Activated CD8-positive, alpha-beta T cell treated with anti-CD3 and anti-CD28 coated beads for 36 hours (primary cell): ENCODE measurements at regions of chr2 and their contacts with region 1.

Region 1: DNA sequence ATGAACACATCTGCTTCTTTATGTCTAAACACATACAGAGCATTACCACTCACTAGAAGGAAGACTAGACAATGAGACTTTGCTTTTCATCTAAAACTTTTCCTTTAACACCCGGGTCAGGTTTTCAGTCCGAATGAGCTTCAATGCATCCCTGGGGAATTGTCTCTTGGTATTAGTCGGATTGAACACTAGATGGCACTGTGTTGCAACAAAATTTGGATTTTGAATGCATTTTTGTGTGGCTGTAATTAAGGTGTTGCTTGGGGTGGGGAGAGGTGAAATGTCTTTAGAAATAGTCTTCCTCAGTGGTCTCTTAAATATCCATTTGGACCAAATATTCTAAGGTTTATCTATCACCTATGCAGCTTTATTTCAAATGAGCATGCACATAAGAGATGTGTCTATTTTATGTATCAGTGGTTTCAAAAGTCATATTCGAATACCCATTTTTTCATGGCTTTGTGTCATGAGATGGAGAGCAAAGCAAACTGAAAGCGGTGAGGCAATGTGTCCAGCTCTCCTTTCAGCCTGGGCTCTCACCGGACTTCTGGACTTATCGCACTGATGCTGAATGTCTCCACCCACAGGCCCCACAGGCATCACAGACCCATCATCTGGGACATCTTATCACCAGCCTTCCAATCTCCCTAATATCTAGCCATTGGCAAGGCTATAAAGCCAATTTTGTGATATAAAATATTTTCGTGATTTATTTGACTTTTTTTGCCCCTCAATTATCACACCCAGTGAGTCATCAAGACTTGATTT is 510.3 kb downstream of the RNF144A start:
- DNase-seq: no peak
- ATAC-seq: peak; percentile 7
- H3K4me3 Mint-ChIP-seq: peak overlapping the region; percentile 24
- H3K27ac Mint-ChIP-seq: peak overlapping the region; percentile 74
- H3K4me1 Mint-ChIP-seq: peaks cover 41% of the 10 kb centered on the region
- H3K27me3 Mint-ChIP-seq: peaks cover 2% of the 10 kb centered on the region
- CTCF ChIP-seq: peak; percentile 92

Region 2: GRCh38 chr2:7348761-7349160 is 78.7 kb before region 1 on chr2:
- CTCF ChIA-PET with region 1: no interaction called
- POLR2A ChIA-PET with region 1: no interaction called
- intact Hi-C with region 1: no loop called
- DNase-seq: no peak
- ATAC-seq: no peak
- H3K4me3 Mint-ChIP-seq: no peak overlapping the region
- H3K27ac Mint-ChIP-seq: no peak overlapping the region
- H3K4me1 Mint-ChIP-seq: no peaks in the 10 kb centered on the region
- H3K27me3 Mint-ChIP-seq: no peaks in the 10 kb centered on the region
- CTCF ChIP-seq: no peak

Region 3: DNA sequence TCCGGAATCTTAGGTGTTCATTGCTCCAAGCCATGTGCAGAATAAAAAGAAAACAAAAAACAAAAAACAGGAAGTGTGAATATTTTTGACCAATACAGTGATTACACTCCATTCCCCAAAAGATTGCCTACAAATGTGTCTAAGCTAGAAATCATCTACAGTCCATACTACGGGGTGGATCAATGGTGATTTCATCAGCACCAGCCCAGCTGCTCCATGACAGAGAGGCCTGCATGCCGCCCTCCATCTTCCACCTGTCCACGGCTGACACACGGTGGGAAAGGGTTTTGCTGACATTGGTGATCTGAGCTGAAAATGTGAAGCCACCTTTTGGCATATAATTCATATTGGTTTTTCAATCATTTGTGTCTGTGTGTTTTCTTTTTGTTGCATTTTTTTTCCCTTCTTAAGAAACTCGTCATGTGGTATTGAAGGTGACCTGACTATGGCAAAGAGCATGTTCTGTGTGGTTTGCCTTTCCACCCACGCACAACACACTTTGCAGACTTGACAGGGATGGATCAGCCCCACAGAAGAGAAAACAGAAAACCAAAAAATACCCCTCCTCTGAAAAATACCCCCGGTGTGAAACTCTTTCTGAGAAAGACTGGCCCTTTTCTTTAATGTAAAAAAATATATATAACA is 22.8 kb after region 1 on chr2:
- CTCF ChIA-PET with region 1: interaction called, 27 read pairs
- POLR2A ChIA-PET with region 1: interaction called, 128 read pairs
- intact Hi-C with region 1: no loop called
- DNase-seq: peak; percentile 92
- ATAC-seq: peak; percentile 73
- H3K4me3 Mint-ChIP-seq: peak overlapping the region; percentile 48
- H3K27ac Mint-ChIP-seq: peak overlapping the region; percentile 97
- H3K4me1 Mint-ChIP-seq: peaks cover 77% of the 10 kb centered on the region
- H3K27me3 Mint-ChIP-seq: no peaks in the 10 kb centered on the region
- CTCF ChIP-seq: no peak

Region 4: GRCh38 chr2:7523481-7524120 is 96.1 kb after region 1 on chr2:
- CTCF ChIA-PET with region 1: interaction called, 19 read pairs
- POLR2A ChIA-PET with region 1: interaction called, 6 read pairs
- intact Hi-C with region 1: loop called (anchors 10 kb)
- DNase-seq: peak; percentile 32
- ATAC-seq: peak; percentile 54
- H3K4me3 Mint-ChIP-seq: peak overlapping the region; percentile 48
- H3K27ac Mint-ChIP-seq: peak overlapping the region; percentile 87
- H3K4me1 Mint-ChIP-seq: peaks cover 72% of the 10 kb centered on the region
- H3K27me3 Mint-ChIP-seq: no peaks in the 10 kb centered on the region
- CTCF ChIP-seq: no peak

Region 5: GRCh38 chr2:7567646-7568045 is 140.2 kb after region 1 on chr2:
- CTCF ChIA-PET with region 1: interaction called, 30 read pairs
- POLR2A ChIA-PET with region 1: interaction called, 7 read pairs
- intact Hi-C with region 1: loop called (anchors 2 kb)
- DNase-seq: peak; percentile 89
- ATAC-seq: peak; percentile 95
- H3K4me3 Mint-ChIP-seq: peak overlapping the region; percentile 39
- H3K27ac Mint-ChIP-seq: peak overlapping the region; percentile 92
- H3K4me1 Mint-ChIP-seq: peaks cover 72% of the 10 kb centered on the region
- H3K27me3 Mint-ChIP-seq: no peaks in the 10 kb centered on the region
- CTCF ChIP-seq: peak; percentile 30

Region 6: GRCh38 chr2:7672027-7672684 is 244.7 kb after region 1 on chr2:
- CTCF ChIA-PET with region 1: interaction called, 32 read pairs
- POLR2A ChIA-PET with region 1: interaction called, 10 read pairs
- intact Hi-C with region 1: loop called (anchors 5 kb)
- DNase-seq: peak; percentile 85
- ATAC-seq: peak; percentile 84
- H3K4me3 Mint-ChIP-seq: peak overlapping the region; percentile 50
- H3K27ac Mint-ChIP-seq: peak overlapping the region; percentile 95
- H3K4me1 Mint-ChIP-seq: peaks cover 62% of the 10 kb centered on the region
- H3K27me3 Mint-ChIP-seq: no peaks in the 10 kb centered on the region
- CTCF ChIP-seq: peak; percentile 98

Region 7: GRCh38 chr2:7748717-7749415 is 321.4 kb after region 1 on chr2:
- CTCF ChIA-PET with region 1: no interaction called
- POLR2A ChIA-PET with region 1: interaction called, 3 read pairs
- intact Hi-C with region 1: loop called (anchors 5 kb)
- DNase-seq: peak; percentile 66
- ATAC-seq: peak; percentile 61
- H3K4me3 Mint-ChIP-seq: peak overlapping the region; percentile 47
- H3K27ac Mint-ChIP-seq: peak overlapping the region; percentile 80
- H3K4me1 Mint-ChIP-seq: peaks cover 40% of the 10 kb centered on the region
- H3K27me3 Mint-ChIP-seq: no peaks in the 10 kb centered on the region
- CTCF ChIP-seq: no peak

Region 8: GRCh38 chr2:7950035-7950612 is 522.6 kb after region 1 on chr2:
- CTCF ChIA-PET with region 1: no interaction called
- POLR2A ChIA-PET with region 1: no interaction called
- intact Hi-C with region 1: no loop called
- DNase-seq: no peak
- ATAC-seq: no peak
- H3K4me3 Mint-ChIP-seq: no peak overlapping the region
- H3K27ac Mint-ChIP-seq: no peak overlapping the region
- H3K4me1 Mint-ChIP-seq: no peaks in the 10 kb centered on the region
- H3K27me3 Mint-ChIP-seq: no peaks in the 10 kb centered on the region
- CTCF ChIP-seq: no peak